CD8-positive, alpha-beta memory T cell (primary cell): ENCODE measurements at regions of chr6 and their contacts with region 1.

Region 1: DNA sequence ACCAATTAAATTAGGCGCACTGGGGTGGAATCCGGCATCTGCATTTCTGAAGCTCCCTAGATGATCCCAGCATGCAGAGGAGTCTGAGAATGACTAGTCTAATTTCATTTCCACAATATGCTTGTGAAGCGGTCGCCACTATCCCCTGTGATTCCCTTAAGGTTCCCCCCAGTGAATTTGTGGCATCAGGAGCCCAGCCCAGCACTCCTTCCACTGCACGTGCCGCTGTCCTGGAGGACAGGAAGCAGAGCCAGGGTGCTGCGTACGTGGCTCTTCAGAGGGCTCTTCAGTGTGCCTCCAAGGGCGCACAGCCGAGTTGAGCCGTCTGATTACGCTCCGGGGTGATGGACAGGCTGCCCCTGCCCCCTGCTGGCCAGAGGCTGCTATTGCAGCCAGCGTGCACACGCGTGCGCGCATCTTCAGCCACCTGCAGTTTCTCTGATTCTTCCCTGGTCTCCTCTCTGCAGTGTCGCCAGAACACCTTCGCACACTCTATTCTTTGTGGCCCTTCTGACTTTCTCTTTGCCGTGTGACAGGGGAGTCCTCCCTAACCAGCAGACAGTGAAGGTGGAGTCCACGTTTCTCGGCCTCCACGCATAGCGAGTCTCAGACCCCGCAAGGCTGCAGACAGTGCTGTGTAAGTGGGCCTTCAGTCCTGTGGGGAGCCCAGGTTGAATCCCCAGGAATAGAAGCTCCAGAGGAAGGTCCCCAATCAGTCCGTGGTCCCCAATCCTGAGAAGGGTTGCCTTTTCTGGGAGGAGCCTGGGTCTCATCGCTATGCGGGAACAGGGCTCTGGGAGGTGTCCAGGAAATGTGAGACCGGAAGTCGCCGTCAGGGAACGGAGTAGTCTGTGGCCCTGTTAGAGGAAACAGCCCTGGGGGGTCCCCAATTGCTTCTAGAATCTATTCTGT is 16.5 kb upstream of the NCR2 start:
- DNase-seq: peak; percentile 69 to 83 (median 75)
- H3K4me3 ChIP-seq: peak overlapping the region; percentile 34
- H3K4me3 Mint-ChIP-seq: peak overlapping the region in 6 of 7 donors; percentile 50 to 71 (median 70)
- H3K27ac ChIP-seq: no peak overlapping the region
- H3K27ac Mint-ChIP-seq: peak overlapping the region in 2 of 8 donors; percentile 13 to 32
- H3K4me1 ChIP-seq: peaks cover 12% of the 10 kb centered on the region
- H3K4me1 Mint-ChIP-seq: peaks cover 7 to 15% (median 10%) of the 10 kb centered on the region in 3 donors
- H3K27me3 ChIP-seq: peaks cover 10% of the 10 kb centered on the region
- H3K27me3 Mint-ChIP-seq: peaks cover 5 to 40% of the 10 kb centered on the region in 2 donors

Region 2: DNA sequence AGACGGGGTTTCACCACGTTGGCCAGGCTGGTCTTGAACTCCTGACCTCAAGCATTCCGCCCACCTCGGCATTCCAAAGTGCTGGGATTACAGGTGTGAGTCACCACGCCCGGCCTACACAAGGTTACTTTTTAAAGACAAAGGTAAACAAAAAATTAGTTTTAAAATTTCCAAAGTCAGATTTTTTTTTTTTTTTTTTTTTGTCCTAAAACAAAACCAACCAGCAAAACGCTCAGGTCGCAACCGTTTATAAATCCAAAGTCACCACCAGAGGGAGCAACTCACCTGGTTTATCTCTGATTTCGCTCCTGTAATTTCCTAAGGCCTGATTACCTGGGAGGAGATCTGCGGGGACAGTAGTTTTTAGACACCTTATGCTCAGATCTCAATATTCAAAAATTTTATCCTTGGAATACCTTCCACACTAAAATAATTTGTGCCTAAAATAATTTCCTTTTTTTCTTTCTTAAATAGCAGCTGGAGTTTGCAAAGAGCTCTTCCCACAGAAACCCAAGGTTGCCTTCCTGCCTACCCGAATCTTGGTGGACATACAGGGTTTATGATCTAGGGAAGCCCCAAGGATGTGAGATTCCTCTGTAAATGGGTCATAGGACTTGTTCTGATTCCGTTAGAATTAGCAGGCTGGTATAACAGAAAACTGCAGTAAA is 12.6 kb before region 1 on chr6:
- CTCF ChIA-PET with region 1: interaction called, 22 read pairs
- POLR2A ChIA-PET with region 1: no interaction called
- DNase-seq: peak in 4 of 5 donors; percentile 4 to 46 (median 26)
- H3K4me3 ChIP-seq: no peak overlapping the region
- H3K4me3 Mint-ChIP-seq: no peak overlapping the region
- H3K27ac ChIP-seq: no peak overlapping the region
- H3K27ac Mint-ChIP-seq: peak overlapping the region in 1 of 8 donors; percentile 22
- H3K4me1 ChIP-seq: no peaks in the 10 kb centered on the region
- H3K4me1 Mint-ChIP-seq: peaks cover 0 to 5% (median 4%) of the 10 kb centered on the region in 3 donors
- H3K27me3 ChIP-seq: no peaks in the 10 kb centered on the region
- H3K27me3 Mint-ChIP-seq: peaks cover 9 to 33% of the 10 kb centered on the region in 2 donors